CD4-positive, alpha-beta memory T cell (primary cell): ENCODE measurements at regions of chr16 and their contacts with region 1.

Region 1: DNA sequence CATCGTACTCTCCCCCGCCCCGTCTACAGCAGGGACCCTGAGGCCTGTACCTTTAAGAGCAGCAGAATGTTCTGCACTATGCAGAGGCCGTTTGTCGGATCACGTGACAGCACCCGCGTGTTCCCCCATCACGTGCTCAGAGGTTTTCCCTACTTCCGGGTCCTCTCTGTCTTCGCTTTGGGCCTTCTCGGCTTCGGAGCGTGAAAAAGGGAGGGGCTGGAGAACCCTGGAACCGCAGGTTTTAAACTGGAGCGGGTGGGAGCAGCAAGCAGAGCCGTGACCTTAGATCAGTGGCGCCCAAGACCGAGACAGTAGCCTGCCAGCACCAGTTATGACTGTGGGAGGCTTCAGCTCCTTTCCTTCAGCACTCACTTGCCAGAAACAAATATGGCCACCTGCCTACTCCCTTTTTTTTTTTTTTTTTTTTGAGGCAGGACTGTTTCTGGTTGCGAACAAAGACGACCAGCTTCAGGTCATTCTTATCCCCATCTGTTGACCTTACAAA is at the start of gene CLN3:
- DNase-seq: peak; percentile 91 to 95 (median 93)
- H3K4me3 ChIP-seq: peak within 1 kb of the TSS; percentile 36 to 82
- H3K4me3 Mint-ChIP-seq: peak within 1 kb of the TSS; percentile 96 to 99 (median 98)
- H3K27ac ChIP-seq: peak within 1 kb of the TSS; percentile 93
- H3K27ac Mint-ChIP-seq: peak within 1 kb of the TSS; percentile 99 to 100 (median 100)
- H3K4me1 ChIP-seq: peaks cover 65% of the 10 kb centered on the region
- H3K4me1 Mint-ChIP-seq: peaks cover 39 to 77% (median 61%) of the 10 kb centered on the region in 4 donors
- H3K27me3 ChIP-seq: no peaks in the 10 kb centered on the region
- H3K27me3 Mint-ChIP-seq: no peaks in the 10 kb centered on the region
- total RNA-seq, gene CLN3: 62.1 to 63.6 TPM

Region 2: DNA sequence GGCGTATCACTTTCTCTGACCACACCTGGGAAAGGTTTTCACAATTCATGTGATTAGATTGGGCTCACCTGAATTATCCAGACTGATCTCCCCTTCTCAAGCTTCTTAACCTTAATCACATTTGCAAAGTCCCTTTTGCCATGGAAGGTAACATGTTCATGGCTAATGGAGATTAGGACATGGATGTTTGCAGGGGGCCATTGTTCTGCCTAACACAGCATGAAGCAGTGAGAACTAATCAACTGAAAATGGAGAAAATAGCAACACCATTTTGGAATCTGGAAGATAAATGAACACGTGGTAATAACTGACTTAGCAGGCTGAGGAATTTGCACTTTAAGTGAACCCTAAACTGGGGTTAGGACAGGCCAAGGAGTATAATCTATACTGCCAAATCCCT is 224.7 kb before region 1 on chr16:
- CTCF ChIA-PET with region 1: no interaction called
- POLR2A ChIA-PET with region 1: no interaction called
- intact Hi-C with region 1: no loop called
- DNase-seq: no peak
- H3K4me3 ChIP-seq: no peak overlapping the region
- H3K4me3 Mint-ChIP-seq: no peak overlapping the region
- H3K27ac ChIP-seq: no peak overlapping the region
- H3K27ac Mint-ChIP-seq: no peak overlapping the region
- H3K4me1 ChIP-seq: peaks cover 8% of the 10 kb centered on the region
- H3K4me1 Mint-ChIP-seq: peaks cover 0 to 15% (median 8%) of the 10 kb centered on the region in 4 donors
- H3K27me3 ChIP-seq: no peaks in the 10 kb centered on the region
- H3K27me3 Mint-ChIP-seq: peaks cover 7 to 12% of the 10 kb centered on the region in 2 donors

Region 3: GRCh38 chr16:28478506-28479200 is 13.4 kb before region 1 on chr16:
- CTCF ChIA-PET with region 1: no interaction called
- POLR2A ChIA-PET with region 1: interaction called, 15 read pairs
- intact Hi-C with region 1: no loop called
- DNase-seq: no peak
- H3K4me3 ChIP-seq: no peak overlapping the region
- H3K4me3 Mint-ChIP-seq: no peak overlapping the region
- H3K27ac ChIP-seq: no peak overlapping the region
- H3K27ac Mint-ChIP-seq: peak overlapping the region in 1 of 7 donors; percentile 19
- H3K4me1 ChIP-seq: no peaks in the 10 kb centered on the region
- H3K4me1 Mint-ChIP-seq: peaks cover 1 to 3% (median 2%) of the 10 kb centered on the region in 4 donors
- H3K27me3 ChIP-seq: no peaks in the 10 kb centered on the region
- H3K27me3 Mint-ChIP-seq: no peaks in the 10 kb centered on the region

Region 4: DNA sequence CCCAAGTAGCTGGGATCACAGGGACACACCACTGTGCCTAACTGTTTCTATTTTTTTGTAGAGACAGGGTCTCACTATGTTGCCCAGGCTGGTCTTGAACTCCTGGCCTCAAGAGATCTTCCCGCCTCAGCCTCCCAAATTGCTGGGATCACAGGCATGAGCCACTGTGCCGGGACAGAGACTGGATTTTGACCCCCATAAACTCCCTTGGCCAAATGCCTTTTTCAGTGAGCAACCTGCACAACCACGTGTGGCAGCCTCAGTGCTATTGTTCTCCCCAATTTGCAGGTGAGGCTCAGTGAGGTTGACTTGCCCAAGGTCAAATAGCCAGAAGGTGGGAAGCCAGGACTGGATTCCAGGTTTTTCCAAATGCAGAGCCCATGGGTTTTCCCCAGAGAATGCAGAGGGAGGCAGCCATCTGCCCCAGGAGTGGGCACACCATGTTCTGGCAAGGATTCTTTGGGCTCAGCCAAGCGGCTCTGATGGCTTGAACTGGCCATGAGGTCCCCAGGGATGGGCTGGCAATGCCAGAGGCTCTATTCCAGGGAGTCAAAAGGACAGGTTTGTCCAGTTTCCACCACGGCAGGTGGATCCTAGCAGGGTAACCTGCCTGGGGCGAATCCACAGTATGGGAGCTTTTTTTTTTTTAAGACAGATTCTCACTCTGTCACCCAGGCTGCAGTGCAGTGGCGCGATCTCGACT is 12.8 kb after region 1 on chr16:
- CTCF ChIA-PET with region 1: no interaction called
- POLR2A ChIA-PET with region 1: interaction called, 17 read pairs
- intact Hi-C with region 1: no loop called
- DNase-seq: no peak
- H3K4me3 ChIP-seq: no peak overlapping the region
- H3K4me3 Mint-ChIP-seq: no peak overlapping the region
- H3K27ac ChIP-seq: no peak overlapping the region
- H3K27ac Mint-ChIP-seq: no peak overlapping the region
- H3K4me1 ChIP-seq: peaks cover 15% of the 10 kb centered on the region
- H3K4me1 Mint-ChIP-seq: peaks cover 8 to 20% (median 11%) of the 10 kb centered on the region in 4 donors
- H3K27me3 ChIP-seq: no peaks in the 10 kb centered on the region
- H3K27me3 Mint-ChIP-seq: no peaks in the 10 kb centered on the region

Region 5: GRCh38 chr16:28513484-28514181 is 21.6 kb after region 1 on chr16:
- CTCF ChIA-PET with region 1: interaction called, 9 read pairs
- POLR2A ChIA-PET with region 1: interaction called, 11 read pairs
- intact Hi-C with region 1: no loop called
- DNase-seq: no peak
- H3K4me3 ChIP-seq: no peak overlapping the region
- H3K4me3 Mint-ChIP-seq: no peak overlapping the region
- H3K27ac ChIP-seq: no peak overlapping the region
- H3K27ac Mint-ChIP-seq: peak overlapping the region in 6 of 7 donors; percentile 1 to 69 (median 46)
- H3K4me1 ChIP-seq: peaks cover 2% of the 10 kb centered on the region
- H3K4me1 Mint-ChIP-seq: peaks cover 0 to 6% (median 3%) of the 10 kb centered on the region in 4 donors
- H3K27me3 ChIP-seq: no peaks in the 10 kb centered on the region
- H3K27me3 Mint-ChIP-seq: no peaks in the 10 kb centered on the region

Region 6: DNA sequence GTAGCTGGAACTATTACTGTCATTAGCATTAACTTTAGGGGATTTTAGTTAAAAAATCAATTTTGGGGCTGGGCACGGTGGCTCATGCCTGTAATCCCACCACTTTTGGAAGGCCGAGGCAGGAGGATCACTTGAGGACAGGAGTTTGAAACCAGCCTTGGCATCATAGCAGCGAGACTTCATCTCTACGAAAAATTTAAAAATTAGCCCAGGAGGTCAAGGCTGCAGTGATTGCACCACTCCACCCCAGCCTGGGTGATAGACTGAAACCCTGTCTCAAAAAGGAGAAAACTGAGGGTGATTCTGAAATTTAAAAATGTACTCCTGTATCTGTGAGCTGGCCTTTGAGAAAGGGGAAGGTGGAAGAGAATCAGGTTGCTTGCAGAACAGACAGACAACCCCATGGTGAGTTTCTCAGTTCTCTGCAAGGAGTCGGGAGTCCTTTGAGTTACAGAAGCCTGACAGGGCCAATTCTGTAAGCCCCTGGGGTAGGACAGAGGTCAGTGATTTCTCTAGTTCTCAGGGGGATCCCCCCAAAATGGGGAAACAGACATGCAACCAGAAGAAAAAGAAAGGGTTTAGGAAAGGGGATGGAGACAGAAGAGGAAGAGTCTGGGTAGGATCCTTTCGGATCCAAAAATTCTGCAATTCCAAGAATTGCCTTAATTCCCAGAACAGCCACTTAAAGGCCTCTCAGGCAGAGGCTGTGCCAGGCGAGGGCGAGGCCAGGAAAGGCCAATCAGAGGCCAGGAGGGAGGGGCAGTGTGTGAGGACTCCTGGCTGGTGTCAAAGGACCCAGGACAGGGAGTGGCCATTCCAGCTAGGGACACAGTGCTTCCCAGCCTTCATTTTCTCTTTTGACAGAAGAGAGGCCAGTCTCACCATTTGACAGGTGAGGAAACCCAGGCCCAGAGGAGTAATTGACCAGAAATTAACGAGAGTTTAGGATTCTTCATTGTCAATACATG is 40.0 kb after region 1 on chr16:
- CTCF ChIA-PET with region 1: interaction called, 12 read pairs
- POLR2A ChIA-PET with region 1: interaction called, 122 read pairs
- intact Hi-C with region 1: loop called (anchors 1 kb)
- DNase-seq: no peak
- H3K4me3 ChIP-seq: no peak overlapping the region
- H3K4me3 Mint-ChIP-seq: peak overlapping the region in 2 of 8 donors; percentile 5 to 50
- H3K27ac ChIP-seq: no peak overlapping the region
- H3K27ac Mint-ChIP-seq: peak overlapping the region in 5 of 7 donors; percentile 10 to 92 (median 86)
- H3K4me1 ChIP-seq: peaks cover 38% of the 10 kb centered on the region
- H3K4me1 Mint-ChIP-seq: peaks cover 25 to 45% (median 36%) of the 10 kb centered on the region in 4 donors
- H3K27me3 ChIP-seq: no peaks in the 10 kb centered on the region
- H3K27me3 Mint-ChIP-seq: no peaks in the 10 kb centered on the region

Region 7: GRCh38 chr16:28553776-28554633 is 62.0 kb after region 1 on chr16 and contains the start of gene SGF29:
- CTCF ChIA-PET with region 1: interaction called, 20 read pairs
- POLR2A ChIA-PET with region 1: interaction called, 59 read pairs
- intact Hi-C with region 1: loop called (anchors 1 kb)
- DNase-seq: peak; percentile 94 to 96 (median 96)
- H3K4me3 ChIP-seq: peak within 1 kb of the TSS; percentile 50 to 90
- H3K4me3 Mint-ChIP-seq: peak within 1 kb of the TSS; percentile 79 to 96 (median 92)
- H3K27ac ChIP-seq: peak within 1 kb of the TSS; percentile 95
- H3K27ac Mint-ChIP-seq: peak within 1 kb of the TSS; percentile 95 to 99 (median 98)
- H3K4me1 ChIP-seq: peaks cover 35% of the 10 kb centered on the region
- H3K4me1 Mint-ChIP-seq: peaks cover 21 to 46% (median 33%) of the 10 kb centered on the region in 4 donors
- H3K27me3 ChIP-seq: no peaks in the 10 kb centered on the region
- H3K27me3 Mint-ChIP-seq: no peaks in the 10 kb centered on the region
- total RNA-seq, gene SGF29: 67.5 to 70.0 TPM